CD8-positive, alpha-beta T cell (primary cell): ENCODE measurements at regions of chr2 and their contacts with region 1.

Region 1: DNA sequence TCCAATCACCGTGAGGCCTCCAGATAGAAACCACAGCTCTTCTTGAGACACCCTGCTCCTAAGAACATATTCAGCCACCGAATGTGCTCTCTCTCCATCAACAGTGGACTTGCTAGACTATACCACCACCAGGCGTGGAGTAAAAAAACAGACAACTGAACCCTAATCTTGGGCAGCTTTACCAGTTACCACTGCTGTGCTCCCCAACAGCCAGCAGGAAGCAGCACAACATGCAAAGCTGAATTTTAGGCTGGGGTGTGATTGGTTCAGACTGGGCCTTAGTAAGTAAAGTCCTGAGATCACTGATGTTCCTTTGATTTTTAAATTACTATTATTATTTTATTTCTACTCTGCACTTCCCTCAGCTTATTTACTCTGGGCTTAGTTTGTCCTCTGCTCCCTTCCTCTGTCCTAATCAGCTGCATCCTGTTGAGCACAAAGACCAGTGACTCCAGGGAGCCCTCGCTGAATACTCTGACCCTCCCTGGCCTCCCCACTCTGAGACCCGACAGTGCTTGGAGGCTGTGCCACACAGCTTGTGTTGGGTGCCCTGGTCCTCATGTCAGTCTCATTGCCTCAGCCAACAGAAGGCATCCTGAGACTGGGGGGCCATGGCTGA is 21.9 kb downstream of the MRPL35 start:
- DNase-seq: peak in 8 of 9 experiments; percentile 18 to 69 (median 38)
- ATAC-seq: peak; percentile 74
- H3K4me3 ChIP-seq: no peak overlapping the region
- H3K4me3 Mint-ChIP-seq: no peak overlapping the region
- H3K27ac ChIP-seq: no peak overlapping the region
- H3K27ac Mint-ChIP-seq: no peak overlapping the region
- H3K4me1 ChIP-seq: peaks cover 4% of the 10 kb centered on the region
- H3K4me1 Mint-ChIP-seq: peaks cover 9% of the 10 kb centered on the region
- H3K27me3 ChIP-seq: no peaks in the 10 kb centered on the region
- H3K27me3 Mint-ChIP-seq: no peaks in the 10 kb centered on the region
- CTCF ChIP-seq: peak; percentile 72

Region 2: DNA sequence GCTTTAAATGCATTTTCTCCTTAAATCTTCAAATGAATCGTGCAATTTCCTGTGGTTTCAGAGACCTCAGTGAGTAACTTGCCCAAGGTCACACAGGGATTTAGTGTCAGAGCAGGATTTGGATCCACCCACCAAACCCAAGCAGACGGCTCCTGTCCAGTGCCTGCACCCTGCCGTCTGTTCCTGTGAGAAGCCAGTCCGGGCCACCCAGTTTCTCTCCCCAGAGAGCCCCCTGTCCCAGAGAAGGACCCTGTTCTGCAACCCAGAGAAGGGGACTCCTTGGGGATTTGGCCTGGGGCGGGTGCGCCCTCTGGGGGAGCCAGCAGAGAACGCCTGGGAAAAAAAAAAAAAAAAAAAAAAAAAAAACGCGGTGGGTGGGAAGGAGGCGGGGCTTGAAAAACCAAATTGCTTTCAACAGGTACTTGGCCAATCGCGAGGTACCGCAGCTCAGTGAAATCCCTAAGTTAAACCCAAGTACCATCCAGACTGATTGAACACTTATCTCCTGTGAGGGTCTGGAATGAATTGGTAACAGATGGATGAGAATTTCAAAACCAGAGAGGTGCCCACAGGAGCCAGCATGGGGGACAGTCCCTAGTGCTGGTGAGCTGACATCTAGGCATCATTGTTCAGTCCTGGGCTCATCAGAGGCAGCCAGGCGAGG is 147.1 kb after region 1 on chr2:
- CTCF ChIA-PET with region 1: interaction called, 20 read pairs
- POLR2A ChIA-PET with region 1: no interaction called
- intact Hi-C with region 1: loop called (anchors 1 to 5 kb)
- DNase-seq: peak in 8 of 9 experiments; percentile 20 to 68 (median 34)
- ATAC-seq: peak; percentile 67
- H3K4me3 ChIP-seq: peak overlapping the region in 1 of 2 experiments; percentile 13
- H3K4me3 Mint-ChIP-seq: peak overlapping the region; percentile 67
- H3K27ac ChIP-seq: no peak overlapping the region
- H3K27ac Mint-ChIP-seq: peak overlapping the region; percentile 79
- H3K4me1 ChIP-seq: peaks cover 32% of the 10 kb centered on the region
- H3K4me1 Mint-ChIP-seq: peaks cover 44% of the 10 kb centered on the region
- H3K27me3 ChIP-seq: no peaks in the 10 kb centered on the region
- H3K27me3 Mint-ChIP-seq: no peaks in the 10 kb centered on the region
- CTCF ChIP-seq: peak; percentile 4